ENCODE measurements at regions of chr5 and their contacts with region 1.

Region 1: GRCh38 chr5:108727651-108728565 is 19.8 kb upstream of the FER start:
- DNase-seq: peak; percentile 92
- ATAC-seq: peak; percentile 100
- H3K4me3 Mint-ChIP-seq: peak overlapping the region; percentile 80
- H3K27ac Mint-ChIP-seq: peak overlapping the region; percentile 80
- H3K4me1 Mint-ChIP-seq: peaks cover 37% of the 10 kb centered on the region
- H3K27me3 Mint-ChIP-seq: no peaks in the 10 kb centered on the region
- CTCF ChIP-seq: no peak

Region 2: GRCh38 chr5:108687595-108688200 is 40.2 kb before region 1 on chr5:
- CTCF ChIA-PET with region 1: interaction called, 3 read pairs
- POLR2A ChIA-PET with region 1: interaction called, 21 read pairs
- DNase-seq: no peak
- ATAC-seq: no peak
- H3K4me3 Mint-ChIP-seq: no peak overlapping the region
- H3K27ac Mint-ChIP-seq: peak overlapping the region; percentile 93
- H3K4me1 Mint-ChIP-seq: peaks cover 53% of the 10 kb centered on the region
- H3K27me3 Mint-ChIP-seq: no peaks in the 10 kb centered on the region
- CTCF ChIP-seq: no peak

Measured in WTC11 (cell line).